ENCODE measurements at regions of chr6 and their contacts with region 1.

Region 1: GRCh38 chr6:55758156-55758888 is 117.1 kb downstream of the BMP5 start:
- DNase-seq: peak; percentile 97
- H3K4me3 Mint-ChIP-seq: peak overlapping the region; percentile 63
- H3K27ac Mint-ChIP-seq: peak overlapping the region; percentile 94
- H3K4me1 Mint-ChIP-seq: peaks cover 45% of the 10 kb centered on the region
- H3K27me3 Mint-ChIP-seq: no peaks in the 10 kb centered on the region
- CTCF ChIP-seq: no peak

Region 2: GRCh38 chr6:55636405-55637102 is 121.8 kb before region 1 on chr6:
- CTCF ChIA-PET with region 1: no interaction called
- POLR2A ChIA-PET with region 1: interaction called, 7 read pairs
- intact Hi-C with region 1: loop called (anchors 10 kb)
- DNase-seq: peak; percentile 78
- H3K4me3 Mint-ChIP-seq: no peak overlapping the region
- H3K27ac Mint-ChIP-seq: peak overlapping the region; percentile 33
- H3K4me1 Mint-ChIP-seq: peaks cover 20% of the 10 kb centered on the region
- H3K27me3 Mint-ChIP-seq: no peaks in the 10 kb centered on the region
- CTCF ChIP-seq: no peak

Region 3: GRCh38 chr6:55868771-55869479 is 110.6 kb after region 1 on chr6:
- CTCF ChIA-PET with region 1: no interaction called
- POLR2A ChIA-PET with region 1: interaction called, 5 read pairs
- intact Hi-C with region 1: loop called (anchors 5 kb)
- DNase-seq: peak; percentile 9
- H3K4me3 Mint-ChIP-seq: no peak overlapping the region
- H3K27ac Mint-ChIP-seq: peak overlapping the region; percentile 73
- H3K4me1 Mint-ChIP-seq: peaks cover 40% of the 10 kb centered on the region
- H3K27me3 Mint-ChIP-seq: no peaks in the 10 kb centered on the region
- CTCF ChIP-seq: no peak

Measured in MCF 10A (cell line).